IMR-90 (cell line): ENCODE measurements at regions of chr5 and their contacts with region 1.

Region 1: GRCh38 chr5:91928754-91929521 is 545.8 kb upstream of the ARRDC3 start:
- DNase-seq: peak; percentile 31
- ATAC-seq: peak; percentile 77
- H3K4me3 ChIP-seq: no peak overlapping the region
- H3K27ac ChIP-seq: no peak overlapping the region
- H3K4me1 ChIP-seq: no peaks in the 10 kb centered on the region
- H3K27me3 ChIP-seq: no peaks in the 10 kb centered on the region
- CTCF ChIP-seq: peak; percentile 62
- POLR2A ChIP-seq: no peak
- RAD21 ChIP-seq: peak; percentile 48

Region 2: DNA sequence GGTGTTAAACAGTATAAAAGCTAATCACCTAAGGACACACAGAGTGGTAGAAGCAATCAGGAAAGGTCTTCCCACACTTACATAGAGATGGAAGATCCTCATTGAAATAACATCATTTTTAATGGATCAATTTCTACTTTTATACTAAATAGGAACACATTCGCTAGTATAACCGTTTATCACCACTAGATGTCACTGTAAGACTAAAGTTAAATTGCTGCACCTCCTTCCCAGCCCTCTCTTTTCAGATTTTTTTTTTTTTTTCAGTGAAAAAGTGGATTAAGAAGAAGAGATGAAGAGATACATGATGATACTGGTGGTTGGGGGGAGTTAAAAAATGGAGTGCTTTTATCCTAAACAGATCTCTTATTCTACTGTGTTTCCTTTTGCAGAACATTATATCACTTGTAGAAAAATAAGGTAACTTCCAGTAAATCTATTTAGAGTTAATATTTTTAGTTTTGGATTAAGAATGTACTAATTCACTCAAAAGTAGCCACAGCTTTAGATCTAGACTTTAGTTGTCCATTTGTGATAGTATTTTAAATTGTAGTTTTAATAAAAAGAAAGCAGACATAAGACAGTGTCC is 428.9 kb before region 1 on chr5:
- CTCF ChIA-PET with region 1: no interaction called
- POLR2A ChIA-PET with region 1: no interaction called
- dilution Hi-C with region 1: no loop called
- in situ Hi-C with region 1: no loop called
- intact Hi-C with region 1: loop called (anchors 10 kb)
- DNase-seq: peak; percentile 54
- ATAC-seq: peak; percentile 77
- H3K4me3 ChIP-seq: no peak overlapping the region
- H3K27ac ChIP-seq: no peak overlapping the region
- H3K4me1 ChIP-seq: no peaks in the 10 kb centered on the region
- H3K27me3 ChIP-seq: no peaks in the 10 kb centered on the region
- CTCF ChIP-seq: peak; percentile 69
- POLR2A ChIP-seq: no peak
- RAD21 ChIP-seq: peak; percentile 67

Region 3: GRCh38 chr5:92222449-92222848 is 293.5 kb after region 1 on chr5:
- CTCF ChIA-PET with region 1: no interaction called
- POLR2A ChIA-PET with region 1: no interaction called
- dilution Hi-C with region 1: no loop called
- in situ Hi-C with region 1: no loop called
- intact Hi-C with region 1: loop called (anchors 1 kb)
- DNase-seq: peak; percentile 1
- ATAC-seq: no peak; the same call in 1 of the 2 replicates
- H3K4me3 ChIP-seq: no peak overlapping the region
- H3K27ac ChIP-seq: no peak overlapping the region
- H3K4me1 ChIP-seq: no peaks in the 10 kb centered on the region
- H3K27me3 ChIP-seq: no peaks in the 10 kb centered on the region
- CTCF ChIP-seq: no peak
- POLR2A ChIP-seq: no peak
- RAD21 ChIP-seq: no peak

Region 4: DNA sequence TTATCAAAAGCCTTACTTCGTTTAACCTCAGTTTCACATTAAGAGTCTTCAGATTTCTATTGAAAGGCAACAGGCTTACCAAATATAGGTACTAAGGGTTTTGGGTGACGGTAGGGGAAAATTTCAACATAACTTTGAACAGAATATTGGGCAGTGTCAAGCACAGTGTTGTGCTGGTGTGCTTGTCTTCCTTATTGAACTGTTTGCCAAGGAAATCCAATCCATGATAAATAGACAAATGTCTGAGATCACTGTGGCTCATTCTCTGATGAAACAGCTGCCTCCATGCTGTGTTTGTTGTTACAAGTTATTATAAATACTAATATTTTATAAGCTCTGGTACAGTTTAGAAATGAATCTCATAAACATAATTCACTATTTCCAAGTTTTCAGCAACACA is 921.9 kb after region 1 on chr5:
- CTCF ChIA-PET with region 1: no interaction called
- POLR2A ChIA-PET with region 1: no interaction called
- dilution Hi-C with region 1: no loop called
- in situ Hi-C with region 1: no loop called
- intact Hi-C with region 1: loop called (anchors 10 kb)
- DNase-seq: peak; percentile 37
- ATAC-seq: peak; percentile 42
- H3K4me3 ChIP-seq: no peak overlapping the region
- H3K27ac ChIP-seq: no peak overlapping the region
- H3K4me1 ChIP-seq: no peaks in the 10 kb centered on the region
- H3K27me3 ChIP-seq: no peaks in the 10 kb centered on the region
- CTCF ChIP-seq: no peak
- POLR2A ChIP-seq: no peak
- RAD21 ChIP-seq: no peak